ENCODE measurements at regions of chrX and their contacts with region 1.

Region 1: DNA sequence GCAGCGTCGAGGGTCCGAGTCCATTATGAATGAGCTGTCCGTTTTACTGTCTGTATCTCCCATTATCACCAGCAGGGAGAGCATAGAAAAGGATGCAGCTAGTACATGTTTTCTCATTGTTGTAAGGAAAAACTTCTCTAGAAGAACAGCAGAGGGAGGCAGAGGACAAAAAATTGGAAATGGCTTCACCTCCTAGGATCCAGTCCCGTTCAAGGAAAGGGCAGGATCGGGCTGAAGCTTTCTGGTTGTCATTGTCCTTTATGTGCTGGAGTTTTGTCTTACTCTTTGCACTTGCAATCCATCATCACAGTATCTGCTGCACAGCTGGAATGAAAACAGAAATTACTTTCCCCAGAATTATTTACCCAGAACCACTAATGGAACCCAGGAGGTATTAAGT is 14.7 kb downstream of the NDP start:
- DNase-seq: peak; percentile 68
- H3K4me3 ChIP-seq: no peak overlapping the region
- H3K27ac ChIP-seq: no peak overlapping the region
- H3K4me1 ChIP-seq: no peaks in the 10 kb centered on the region
- H3K27me3 ChIP-seq: peaks cover 2% of the 10 kb centered on the region
- CTCF ChIP-seq: peak; percentile 77 to 79

Region 2: GRCh38 chrX:42128020-42128419 is 1830.5 kb before region 1 on chrX:
- CTCF ChIA-PET with region 1: no interaction called
- dilution Hi-C with region 1: no loop called
- in situ Hi-C with region 1: no loop called
- intact Hi-C with region 1: no loop called
- DNase-seq: no peak
- H3K4me3 ChIP-seq: no peak overlapping the region
- H3K27ac ChIP-seq: no peak overlapping the region
- H3K4me1 ChIP-seq: peaks cover 3% of the 10 kb centered on the region
- H3K27me3 ChIP-seq: peaks cover 2% of the 10 kb centered on the region
- CTCF ChIP-seq: no peak

Region 3: DNA sequence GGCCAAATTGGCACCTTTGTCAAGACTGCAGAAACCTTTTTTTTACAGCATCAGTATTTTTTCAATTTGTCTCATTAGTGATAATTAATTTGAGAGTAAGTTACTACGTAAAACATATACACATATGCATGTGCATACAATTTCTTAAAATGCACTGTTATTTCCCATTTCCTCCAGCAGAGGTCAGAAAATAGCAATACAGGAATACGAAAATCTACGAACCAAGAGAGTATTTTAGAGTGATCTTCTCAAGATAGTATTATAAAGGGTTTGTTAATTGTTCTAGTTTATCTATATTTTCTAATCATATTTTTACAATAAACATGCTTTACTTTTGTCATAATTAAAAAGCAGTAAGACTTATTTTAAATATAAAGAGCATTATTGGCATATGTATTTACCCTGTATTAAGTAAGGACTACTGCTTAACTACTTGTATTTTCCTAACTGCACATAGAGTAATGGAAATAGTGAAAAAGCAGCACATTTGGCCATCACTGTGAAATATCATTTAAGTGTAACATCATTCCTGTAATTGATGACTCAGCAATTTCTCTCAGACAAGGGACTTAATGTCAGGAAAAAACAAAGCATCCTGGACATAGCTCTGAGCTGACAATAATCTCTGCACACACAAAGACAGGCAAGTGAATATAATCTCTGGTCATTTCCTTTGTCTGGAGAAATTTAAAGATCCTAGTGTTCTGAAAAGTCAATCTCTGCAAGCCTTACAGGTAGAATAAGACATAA is 121.9 kb before region 1 on chrX:
- CTCF ChIA-PET with region 1: no interaction called
- dilution Hi-C with region 1: no loop called
- in situ Hi-C with region 1: loop called (anchors 10 kb)
- intact Hi-C with region 1: loop called (anchors 5 kb)
- DNase-seq: peak; percentile 14
- H3K4me3 ChIP-seq: no peak overlapping the region
- H3K27ac ChIP-seq: no peak overlapping the region
- H3K4me1 ChIP-seq: no peaks in the 10 kb centered on the region
- H3K27me3 ChIP-seq: peaks cover 1% of the 10 kb centered on the region
- CTCF ChIP-seq: peak; percentile 58 to 62

Region 4: GRCh38 chrX:44203791-44204190 is 245.3 kb after region 1 on chrX:
- CTCF ChIA-PET with region 1: no interaction called
- dilution Hi-C with region 1: no loop called
- in situ Hi-C with region 1: no loop called
- intact Hi-C with region 1: loop called (anchors 1 kb)
- DNase-seq: peak; percentile 3
- H3K4me3 ChIP-seq: no peak overlapping the region
- H3K27ac ChIP-seq: no peak overlapping the region
- H3K4me1 ChIP-seq: no peaks in the 10 kb centered on the region
- H3K27me3 ChIP-seq: peaks cover 2% of the 10 kb centered on the region
- CTCF ChIP-seq: peak; percentile 42 to 62

Region 5: DNA sequence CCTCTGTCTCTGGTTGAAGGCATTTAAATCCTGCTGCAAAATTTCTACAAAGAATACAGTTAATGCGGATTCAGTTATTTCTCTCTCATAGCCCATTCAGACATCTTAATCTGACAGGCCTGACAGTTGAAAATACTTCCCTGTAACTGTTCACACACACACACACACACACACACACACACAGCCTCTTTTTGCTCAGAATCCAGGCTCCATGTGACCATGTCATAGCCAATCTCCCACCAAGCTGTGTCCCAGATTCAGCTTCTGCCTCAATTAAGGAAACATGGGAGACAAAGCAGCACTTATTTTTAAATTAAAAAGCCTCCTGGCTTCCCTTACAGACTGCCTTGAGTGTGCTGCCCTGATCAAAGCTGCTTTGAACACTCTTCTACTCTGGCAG is 434.2 kb after region 1 on chrX:
- CTCF ChIA-PET with region 1: no interaction called
- dilution Hi-C with region 1: loop called (anchors 25 kb)
- in situ Hi-C with region 1: no loop called
- intact Hi-C with region 1: no loop called
- DNase-seq: no peak
- H3K4me3 ChIP-seq: no peak overlapping the region
- H3K27ac ChIP-seq: no peak overlapping the region
- H3K4me1 ChIP-seq: no peaks in the 10 kb centered on the region
- H3K27me3 ChIP-seq: peaks cover 3% of the 10 kb centered on the region
- CTCF ChIP-seq: no peak

Region 6: GRCh38 chrX:45070116-45071007 is 1111.8 kb after region 1 on chrX:
- CTCF ChIA-PET with region 1: no interaction called
- dilution Hi-C with region 1: no loop called
- in situ Hi-C with region 1: no loop called
- intact Hi-C with region 1: loop called (anchors 10 kb)
- DNase-seq: peak; percentile 29
- H3K4me3 ChIP-seq: no peak overlapping the region
- H3K27ac ChIP-seq: no peak overlapping the region
- H3K4me1 ChIP-seq: no peaks in the 10 kb centered on the region
- H3K27me3 ChIP-seq: no peaks in the 10 kb centered on the region
- CTCF ChIP-seq: peak; percentile 69 to 72